HepG2 (cell line): ENCODE measurements at regions of chr9 and their contacts with region 1.

Region 1: DNA sequence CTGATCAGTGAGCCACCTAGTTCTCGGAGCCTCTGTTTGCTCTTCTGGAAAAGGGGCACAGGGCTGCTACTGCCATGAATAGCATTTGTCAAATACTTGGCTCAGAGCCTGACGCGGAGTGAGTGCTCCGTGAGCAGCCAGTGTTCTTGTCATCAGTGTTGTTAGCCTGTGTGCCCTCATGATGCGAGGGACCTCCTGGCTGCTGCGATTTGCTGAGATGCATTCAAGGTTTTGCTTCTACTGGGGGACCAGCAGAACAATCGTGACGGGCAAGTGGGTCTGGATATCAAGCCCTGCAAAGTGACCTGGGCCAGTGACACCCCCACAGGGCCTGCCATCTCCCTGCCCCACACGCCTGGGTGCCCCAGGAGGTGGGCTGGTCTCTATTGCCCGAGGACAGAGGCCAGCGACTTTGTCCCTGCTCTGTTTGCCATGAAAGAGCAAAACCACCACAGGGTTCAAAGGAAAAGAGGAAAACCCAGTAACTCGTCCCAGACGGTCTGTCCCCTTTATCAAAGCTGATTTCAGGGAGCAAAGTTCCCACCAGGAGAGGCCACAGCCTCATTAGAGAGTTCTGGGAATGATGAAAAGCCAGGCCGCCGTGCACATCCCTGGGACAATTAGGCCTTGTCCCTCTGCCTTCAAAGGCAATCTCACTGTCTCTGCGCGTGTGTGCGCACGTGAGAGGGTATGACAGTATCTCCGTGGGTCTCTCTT is 86.5 kb upstream of the LMX1B start:
- DNase-seq: peak; percentile 98
- ATAC-seq: peak; percentile 83
- H3K4me3 ChIP-seq: peak overlapping the region; percentile 0 to 65 (median 34); a peak in 5 of 6 replicates
- H3K27ac ChIP-seq: peak overlapping the region; percentile 91
- H3K4me1 ChIP-seq: peaks cover 100% of the 10 kb centered on the region
- H3K27me3 ChIP-seq: no peaks in the 10 kb centered on the region
- CTCF ChIP-seq: no peak; the same call in 1 of the 2 replicates
- EP300 ChIP-seq: peak in 1 of 2 experiments; percentile 95; a peak in 3 of 4 replicates
- POLR2A ChIP-seq: peak; percentile 45 to 58; a peak in 2 of 4 replicates
- RAD21 ChIP-seq: 0 out of 2 replicates have a peak, but pooled peaks have one; percentile 8

Region 2: GRCh38 chr9:126500684-126501382 is 26.4 kb before region 1 on chr9:
- CTCF ChIA-PET with region 1: no interaction called
- POLR2A ChIA-PET with region 1: no interaction called
- in situ Hi-C with region 1: no loop called
- intact Hi-C with region 1: loop called (anchors 1 kb)
- DNase-seq: peak; percentile 69
- ATAC-seq: peak; percentile 76
- H3K4me3 ChIP-seq: no peak overlapping the region; a peak in 1 of 6 replicates
- H3K27ac ChIP-seq: no peak overlapping the region
- H3K4me1 ChIP-seq: peaks cover 32% of the 10 kb centered on the region
- H3K27me3 ChIP-seq: no peaks in the 10 kb centered on the region
- CTCF ChIP-seq: peak; percentile 99
- EP300 ChIP-seq: no peak
- POLR2A ChIP-seq: no peak
- RAD21 ChIP-seq: peak; percentile 97

Region 3: GRCh38 chr9:126516936-126517832 is 10.1 kb before region 1 on chr9:
- CTCF ChIA-PET with region 1: no interaction called
- POLR2A ChIA-PET with region 1: interaction called, 5 read pairs
- in situ Hi-C with region 1: no loop called
- intact Hi-C with region 1: loop called (anchors 1 kb)
- DNase-seq: peak; percentile 87
- ATAC-seq: peak; percentile 92
- H3K4me3 ChIP-seq: peak overlapping the region; percentile 18 to 46 (median 36)
- H3K27ac ChIP-seq: peak overlapping the region; percentile 32
- H3K4me1 ChIP-seq: peaks cover 60% of the 10 kb centered on the region
- H3K27me3 ChIP-seq: no peaks in the 10 kb centered on the region
- CTCF ChIP-seq: 0 out of 2 replicates have a peak, but pooled peaks have one; percentile 21
- EP300 ChIP-seq: peak; percentile 52 to 66; a peak in 2 of 4 replicates
- POLR2A ChIP-seq: no peak
- RAD21 ChIP-seq: no peak